Calu3 (cell line): ENCODE measurements at regions of chr7 and their contacts with region 1.

Region 1: DNA sequence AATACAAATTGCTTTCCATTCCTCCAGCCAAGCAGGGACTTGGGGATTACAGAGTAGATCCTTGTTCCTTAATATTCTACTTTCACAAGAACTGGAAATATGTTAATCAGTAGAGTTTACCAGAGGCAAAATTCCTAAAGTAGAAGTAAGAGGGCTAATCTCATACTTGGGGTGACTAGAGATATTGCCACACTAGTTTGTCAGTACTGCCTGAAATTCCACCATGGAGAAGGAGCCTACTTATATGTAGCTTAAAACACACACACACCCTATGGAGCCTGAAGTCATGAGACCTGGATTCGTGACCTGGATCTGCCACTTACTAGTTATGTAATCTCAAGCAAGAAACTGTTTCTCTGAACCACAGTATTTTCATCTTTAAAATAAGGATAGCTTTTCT is 33.9 kb downstream of the STRIP2 start:
- DNase-seq: no peak
- H3K4me3 Mint-ChIP-seq: no peak overlapping the region
- H3K27ac Mint-ChIP-seq: no peak overlapping the region
- H3K4me1 Mint-ChIP-seq: no peaks in the 10 kb centered on the region
- H3K27me3 Mint-ChIP-seq: no peaks in the 10 kb centered on the region
- CTCF ChIP-seq: no peak

Region 2: GRCh38 chr7:129401967-129402860 is 65.9 kb before region 1 on chr7:
- CTCF ChIA-PET with region 1: interaction called, 3 read pairs
- intact Hi-C with region 1: loop called (anchors 1 kb)
- DNase-seq: no peak
- H3K4me3 Mint-ChIP-seq: no peak overlapping the region
- H3K27ac Mint-ChIP-seq: no peak overlapping the region
- H3K4me1 Mint-ChIP-seq: no peaks in the 10 kb centered on the region
- H3K27me3 Mint-ChIP-seq: no peaks in the 10 kb centered on the region
- CTCF ChIP-seq: no peak

Region 3: DNA sequence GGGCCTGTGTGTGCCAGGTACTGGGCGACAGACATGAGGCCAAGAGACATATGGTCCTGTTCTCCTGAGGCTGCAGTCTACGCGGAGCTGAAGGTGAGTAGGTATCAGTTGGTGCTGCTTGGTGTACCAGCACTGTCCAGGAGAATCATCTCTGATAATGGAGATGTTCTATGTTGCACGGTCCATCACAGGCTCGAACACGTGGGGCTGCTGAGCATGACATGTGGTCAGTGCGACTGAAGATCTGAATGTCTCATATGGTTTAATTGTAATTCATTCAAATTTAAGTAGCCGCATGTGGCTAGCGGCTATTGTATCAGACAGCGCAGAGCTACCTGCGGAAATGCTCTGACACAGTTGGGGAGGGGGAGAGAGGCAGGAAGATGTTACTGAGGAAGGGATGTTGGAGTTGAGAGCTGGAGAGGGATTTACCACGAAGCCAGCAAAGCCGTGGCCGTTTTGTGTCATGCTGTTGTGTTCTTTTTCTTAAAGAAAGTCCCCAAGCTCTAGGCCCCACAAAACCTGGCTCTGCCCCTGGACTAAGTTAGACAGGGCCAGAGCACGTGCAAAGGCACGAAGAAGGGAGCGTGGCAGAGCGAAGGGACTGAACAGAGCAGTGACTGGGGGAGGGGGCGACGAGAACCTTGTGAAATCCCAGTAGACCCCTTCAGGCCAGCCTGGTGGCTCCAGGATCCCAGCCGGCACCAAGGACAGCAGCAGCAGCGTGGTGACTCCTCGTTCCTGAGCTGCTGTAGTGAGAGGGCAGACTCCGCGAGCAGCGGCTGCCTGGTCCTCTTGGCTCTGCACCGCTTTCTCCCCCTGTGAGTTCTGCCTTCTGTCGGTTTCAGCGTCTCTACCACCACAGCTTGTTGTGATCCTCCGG is 54.2 kb after region 1 on chr7:
- CTCF ChIA-PET with region 1: no interaction called
- intact Hi-C with region 1: no loop called
- DNase-seq: no peak
- H3K4me3 Mint-ChIP-seq: no peak overlapping the region
- H3K27ac Mint-ChIP-seq: no peak overlapping the region
- H3K4me1 Mint-ChIP-seq: peaks cover 8% of the 10 kb centered on the region
- H3K27me3 Mint-ChIP-seq: peaks cover 57% of the 10 kb centered on the region
- CTCF ChIP-seq: no peak